T-cell (primary cell): ENCODE measurements at regions of chr4 and their contacts with region 1.

Region 1: GRCh38 chr4:1842993-1843448 is 12.9 kb downstream of the LETM1 start:
- DNase-seq: no peak
- ATAC-seq: no peak
- H3K4me3 ChIP-seq: no peak overlapping the region
- H3K4me3 Mint-ChIP-seq: no peak overlapping the region
- H3K27ac ChIP-seq: no peak overlapping the region
- H3K27ac Mint-ChIP-seq: no peak overlapping the region
- H3K4me1 ChIP-seq: peaks cover 0 to 5% of the 10 kb centered on the region in 2 experiments
- H3K4me1 Mint-ChIP-seq: peaks cover 3 to 10% (median 5%) of the 10 kb centered on the region in 3 donors
- H3K27me3 ChIP-seq: no peaks in the 10 kb centered on the region
- H3K27me3 Mint-ChIP-seq: no peaks in the 10 kb centered on the region

Region 2: GRCh38 chr4:1726146-1726934 is 116.7 kb before region 1 on chr4:
- CTCF ChIA-PET with region 1: interaction called in 1 of 2 experiments, 10 read pairs
- POLR2A ChIA-PET with region 1: no interaction called
- DNase-seq: peak; percentile 67 to 93 (median 86)
- ATAC-seq: peak; percentile 36 to 44 (median 38)
- H3K4me3 ChIP-seq: no peak overlapping the region
- H3K4me3 Mint-ChIP-seq: peak overlapping the region; percentile 43 to 86 (median 50)
- H3K27ac ChIP-seq: no peak overlapping the region
- H3K27ac Mint-ChIP-seq: peak overlapping the region; percentile 66 to 71
- H3K4me1 ChIP-seq: peaks cover 20 to 93% of the 10 kb centered on the region in 2 experiments
- H3K4me1 Mint-ChIP-seq: peaks cover 65 to 77% (median 71%) of the 10 kb centered on the region in 3 donors
- H3K27me3 ChIP-seq: no peaks in the 10 kb centered on the region
- H3K27me3 Mint-ChIP-seq: no peaks in the 10 kb centered on the region

Region 3: DNA sequence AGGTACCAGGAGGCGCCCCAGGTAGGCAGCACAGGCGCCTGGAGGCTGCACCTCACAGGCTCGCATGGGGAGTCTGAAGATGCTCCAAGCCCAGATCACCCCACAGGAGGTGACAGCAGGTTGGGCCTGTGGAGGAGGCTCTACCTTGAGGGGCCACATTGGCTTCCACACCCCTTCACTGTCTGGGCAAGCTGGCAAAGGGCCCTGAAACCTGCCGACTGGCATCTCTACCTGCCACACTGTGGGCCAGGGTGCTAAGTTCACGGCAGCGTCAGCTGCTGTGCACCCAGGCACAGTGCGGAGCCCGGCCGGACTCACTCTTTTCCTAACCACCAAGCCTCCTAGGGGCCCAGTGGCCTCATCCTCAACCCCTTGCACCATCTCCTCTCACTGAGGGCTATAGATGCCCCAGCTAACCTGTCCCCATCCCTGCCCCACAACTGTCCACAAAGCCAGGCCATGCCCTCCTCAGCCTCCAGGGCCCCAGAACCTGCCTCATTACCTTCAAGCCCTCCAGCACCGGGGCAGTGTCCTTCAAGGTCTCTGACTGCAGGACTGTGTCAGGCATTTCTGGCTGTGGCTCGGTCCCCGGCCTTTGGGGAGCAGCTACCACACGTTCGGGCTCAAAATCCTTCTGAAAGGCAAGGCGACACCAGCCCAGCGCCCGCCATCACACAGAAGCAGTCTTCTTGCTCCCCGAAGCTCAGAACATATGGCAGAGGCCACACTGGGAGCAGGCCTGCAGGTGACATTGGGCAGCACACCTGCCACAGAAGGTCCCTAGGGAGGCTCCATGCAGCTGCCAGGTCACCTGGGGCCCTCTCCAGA is 21.1 kb before region 1 on chr4:
- CTCF ChIA-PET with region 1: no interaction called
- POLR2A ChIA-PET with region 1: no interaction called
- DNase-seq: no peak
- ATAC-seq: no peak
- H3K4me3 ChIP-seq: no peak overlapping the region
- H3K4me3 Mint-ChIP-seq: no peak overlapping the region
- H3K27ac ChIP-seq: no peak overlapping the region
- H3K27ac Mint-ChIP-seq: no peak overlapping the region
- H3K4me1 ChIP-seq: no peaks in the 10 kb centered on the region
- H3K4me1 Mint-ChIP-seq: no peaks in the 10 kb centered on the region
- H3K27me3 ChIP-seq: no peaks in the 10 kb centered on the region
- H3K27me3 Mint-ChIP-seq: no peaks in the 10 kb centered on the region

Region 4: GRCh38 chr4:3062471-3062870 is 1219.5 kb after region 1 on chr4:
- CTCF ChIA-PET with region 1: no interaction called
- POLR2A ChIA-PET with region 1: interaction called in 1 of 2 experiments, 15 read pairs
- DNase-seq: no peak
- ATAC-seq: no peak
- H3K4me3 ChIP-seq: no peak overlapping the region
- H3K4me3 Mint-ChIP-seq: no peak overlapping the region
- H3K27ac ChIP-seq: no peak overlapping the region
- H3K27ac Mint-ChIP-seq: no peak overlapping the region
- H3K4me1 ChIP-seq: no peaks in the 10 kb centered on the region
- H3K4me1 Mint-ChIP-seq: no peaks in the 10 kb centered on the region
- H3K27me3 ChIP-seq: peaks cover 0 to 3% of the 10 kb centered on the region in 2 experiments
- H3K27me3 Mint-ChIP-seq: peaks cover 0 to 7% of the 10 kb centered on the region in 2 donors